ENCODE measurements at regions of chr6 and their contacts with region 1.

Region 1: GRCh38 chr6:111259089-111259831 is 172.0 kb downstream of the SLC16A10 start:
- DNase-seq: peak; percentile 99
- ATAC-seq: peak; percentile 95
- H3K4me3 Mint-ChIP-seq: peak overlapping the region; percentile 77
- H3K27ac Mint-ChIP-seq: peak overlapping the region; percentile 88
- H3K4me1 Mint-ChIP-seq: peaks cover 35% of the 10 kb centered on the region
- H3K27me3 Mint-ChIP-seq: peaks cover 18% of the 10 kb centered on the region

Region 2: DNA sequence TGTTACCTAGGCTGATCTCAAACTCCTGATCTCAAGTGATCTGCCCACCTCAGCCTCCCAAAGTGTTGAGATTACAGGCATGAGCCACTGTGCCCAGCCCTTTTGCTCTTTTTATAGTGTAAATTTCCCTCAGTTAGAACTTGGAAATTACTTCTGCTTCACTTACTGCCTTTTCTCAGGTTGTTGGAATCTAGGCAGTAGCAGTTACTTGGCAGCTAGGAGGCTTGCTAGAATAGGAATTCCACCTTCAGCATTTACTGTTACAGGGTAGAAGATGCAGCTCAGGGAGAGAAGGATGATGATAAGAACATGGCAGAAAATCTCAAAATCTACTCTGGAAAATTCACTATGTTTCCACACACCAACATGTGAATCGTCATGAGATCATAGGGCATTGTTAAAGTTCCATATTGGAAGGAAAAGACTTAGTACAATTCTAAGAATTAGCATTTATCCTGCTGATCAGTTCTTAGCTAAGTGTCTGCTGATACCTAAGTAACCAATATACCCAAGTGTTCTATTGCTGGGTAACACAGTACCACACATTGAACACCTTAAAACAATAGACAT is 10.2 kb after region 1 on chr6:
- CTCF ChIA-PET with region 1: interaction called, 15 read pairs
- DNase-seq: no peak
- ATAC-seq: no peak
- H3K4me3 Mint-ChIP-seq: no peak overlapping the region
- H3K27ac Mint-ChIP-seq: no peak overlapping the region
- H3K4me1 Mint-ChIP-seq: peaks cover 5% of the 10 kb centered on the region
- H3K27me3 Mint-ChIP-seq: no peaks in the 10 kb centered on the region

Region 3: DNA sequence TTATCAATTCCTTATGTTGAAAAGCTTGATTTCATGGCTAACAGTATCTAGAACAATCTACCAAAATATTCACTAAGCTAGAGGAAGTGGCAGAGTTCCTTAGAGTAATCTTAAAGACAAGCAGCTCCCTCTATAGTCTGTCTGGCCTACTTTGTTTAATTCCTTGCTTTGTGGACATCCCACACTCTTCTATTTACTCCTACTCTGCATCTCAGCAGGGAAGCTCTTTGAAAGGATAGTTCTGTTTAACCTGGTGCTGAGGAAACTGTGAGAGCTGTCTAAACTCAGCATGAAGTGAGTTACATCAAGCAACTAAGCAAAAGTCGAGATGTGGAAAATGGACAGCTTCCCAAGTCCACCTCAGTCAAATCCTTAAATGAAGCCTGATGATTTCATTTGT is 219.5 kb after region 1 on chr6:
- CTCF ChIA-PET with region 1: interaction called, 72 read pairs
- DNase-seq: no peak
- ATAC-seq: no peak
- H3K4me3 Mint-ChIP-seq: no peak overlapping the region
- H3K27ac Mint-ChIP-seq: peak overlapping the region; percentile 62
- H3K4me1 Mint-ChIP-seq: peaks cover 35% of the 10 kb centered on the region
- H3K27me3 Mint-ChIP-seq: no peaks in the 10 kb centered on the region

Region 4: DNA sequence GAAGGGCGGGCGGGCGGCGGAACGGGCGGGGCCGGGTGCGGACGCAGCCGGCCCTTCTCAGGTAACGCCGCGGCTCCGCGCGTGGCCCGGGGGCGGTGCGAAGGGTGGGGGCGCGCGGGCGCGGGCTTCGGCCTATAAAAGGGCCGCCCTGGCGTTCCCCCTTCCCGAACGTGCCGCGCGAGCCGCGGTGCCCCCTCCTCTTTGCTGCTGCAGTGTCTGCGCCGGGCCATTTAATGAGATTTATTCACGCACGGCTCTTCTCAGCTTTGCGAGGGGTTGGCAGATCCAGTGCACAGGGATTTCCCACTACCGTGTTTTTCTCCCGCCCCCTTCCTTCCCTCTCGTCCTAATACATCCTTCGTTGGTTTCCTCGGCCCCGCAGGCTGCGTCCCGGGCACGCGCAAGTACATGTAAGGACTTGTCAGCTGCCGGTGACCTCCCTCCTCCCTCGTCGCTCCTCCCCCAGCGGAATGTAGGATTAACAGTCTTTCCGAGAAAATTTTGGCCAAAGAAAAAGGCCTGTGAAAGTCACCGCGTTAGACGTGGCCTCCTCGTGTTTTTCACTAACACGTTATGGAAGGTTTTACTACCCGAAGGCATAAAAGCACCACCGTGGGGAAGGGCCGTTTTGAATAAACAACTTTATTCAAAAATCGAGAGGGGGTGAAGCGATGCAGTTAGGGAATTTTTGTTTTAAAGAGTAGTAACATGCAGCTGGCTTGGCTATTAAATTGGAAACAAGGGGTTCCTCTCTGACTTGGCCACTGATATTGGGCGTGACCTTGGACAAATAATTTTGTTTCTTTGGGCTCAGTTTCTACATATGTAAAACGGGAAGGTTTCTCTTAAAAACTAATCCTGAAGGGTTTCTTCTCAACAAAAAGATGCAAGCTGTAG is 224.7 kb after region 1 on chr6:
- CTCF ChIA-PET with region 1: interaction called, 72 read pairs
- DNase-seq: peak; percentile 91
- ATAC-seq: peak; percentile 64
- H3K4me3 Mint-ChIP-seq: peak overlapping the region; percentile 96
- H3K27ac Mint-ChIP-seq: peak overlapping the region; percentile 98
- H3K4me1 Mint-ChIP-seq: peaks cover 54% of the 10 kb centered on the region
- H3K27me3 Mint-ChIP-seq: no peaks in the 10 kb centered on the region

Region 5: DNA sequence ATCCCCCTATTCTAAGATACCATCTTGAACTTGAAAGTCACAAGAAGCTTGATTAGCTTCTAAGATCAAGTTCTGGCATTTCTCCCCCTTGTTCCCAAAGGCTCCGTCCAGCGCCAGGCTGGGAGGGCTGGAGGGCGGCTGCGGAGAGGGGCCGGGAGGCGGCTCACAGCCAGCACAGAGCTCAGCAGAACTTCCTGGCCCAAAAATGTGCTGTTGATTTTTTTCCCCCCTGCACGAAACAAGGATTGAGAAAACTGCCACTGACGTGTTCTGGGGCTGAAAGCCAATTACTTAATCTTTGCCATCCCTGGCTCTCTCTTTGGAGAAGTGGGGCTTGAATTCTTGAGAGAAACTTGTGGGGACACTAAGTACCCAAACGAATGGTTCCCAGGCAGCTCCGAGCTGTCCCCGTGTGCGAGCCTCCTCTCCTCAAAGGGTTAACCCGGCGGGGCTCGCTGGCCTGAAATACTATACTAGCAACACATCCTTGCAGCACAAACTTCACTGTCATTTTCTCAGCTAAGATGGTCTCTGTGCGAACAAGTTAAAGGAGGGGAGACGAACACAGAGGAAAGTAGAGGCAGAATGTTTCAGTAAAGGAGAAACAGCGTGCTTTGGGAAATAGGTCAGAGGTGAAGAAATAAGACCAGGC is 346.0 kb after region 1 on chr6:
- CTCF ChIA-PET with region 1: interaction called, 23 read pairs
- DNase-seq: no peak
- ATAC-seq: peak; percentile 48
- H3K4me3 Mint-ChIP-seq: peak overlapping the region; percentile 82
- H3K27ac Mint-ChIP-seq: peak overlapping the region; percentile 95
- H3K4me1 Mint-ChIP-seq: peaks cover 32% of the 10 kb centered on the region
- H3K27me3 Mint-ChIP-seq: no peaks in the 10 kb centered on the region

Region 6: GRCh38 chr6:111642463-111643158 is 383.4 kb after region 1 on chr6:
- CTCF ChIA-PET with region 1: interaction called, 14 read pairs
- DNase-seq: peak; percentile 66
- ATAC-seq: peak; percentile 80
- H3K4me3 Mint-ChIP-seq: no peak overlapping the region
- H3K27ac Mint-ChIP-seq: no peak overlapping the region
- H3K4me1 Mint-ChIP-seq: no peaks in the 10 kb centered on the region
- H3K27me3 Mint-ChIP-seq: no peaks in the 10 kb centered on the region

Measured in activated CD8-positive, alpha-beta memory T cell treated with anti-CD3 and anti-CD28 coated beads, Interleukin-2, amount 10 ng/mL, durations not matched to agents 7 days and 5 days (primary cell).